CD4-positive, alpha-beta T cell (primary cell): ENCODE measurements at regions of chr17 and their contacts with region 1.

Region 1: DNA sequence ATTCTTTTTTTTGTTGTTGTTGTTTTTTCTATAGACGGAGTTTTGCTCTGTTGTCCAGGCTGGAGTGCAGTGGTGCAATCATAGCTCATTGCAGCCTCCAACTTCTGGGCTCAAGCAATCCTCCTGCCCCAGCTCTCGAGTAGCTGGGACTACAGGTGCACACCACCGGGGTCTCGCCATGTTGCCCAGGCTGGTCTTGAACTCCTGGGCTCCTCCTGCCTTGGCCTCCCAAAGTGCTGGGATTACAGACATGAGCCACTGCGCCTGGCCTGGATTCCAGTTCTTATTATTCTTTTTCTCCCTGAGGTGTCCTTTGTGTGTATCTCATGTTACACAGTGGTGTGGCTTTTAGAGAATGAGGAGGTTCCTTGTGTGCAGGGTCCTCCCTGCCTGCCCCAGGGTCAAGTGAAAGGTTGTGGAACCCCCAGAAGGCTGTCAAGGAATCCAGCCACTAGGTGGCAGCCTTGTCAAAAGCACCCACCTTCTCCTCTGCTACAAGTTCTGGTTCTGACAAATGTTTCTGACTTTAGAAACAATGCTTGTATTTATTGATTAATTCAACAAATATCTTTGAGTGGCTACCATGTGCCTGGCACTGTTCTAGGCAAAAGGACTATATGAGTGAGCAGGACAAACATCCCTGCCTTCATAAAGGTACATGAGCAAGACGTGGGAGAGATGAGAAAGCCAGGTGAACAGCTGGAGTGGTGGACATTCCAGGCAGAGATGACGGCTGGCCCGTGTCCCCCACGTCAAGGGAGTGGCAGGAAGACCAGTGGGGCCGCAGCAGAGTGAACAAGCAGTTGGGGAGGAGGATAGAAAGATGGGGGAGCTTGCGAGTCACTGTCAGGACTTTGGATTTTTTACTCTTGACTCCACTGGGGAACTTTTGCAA is 112.4 kb downstream of the SPECC1 start:
- DNase-seq: peak; percentile 48 to 82 (median 64)
- ATAC-seq: peak; percentile 57
- H3K4me3 ChIP-seq: no peak overlapping the region
- H3K4me3 Mint-ChIP-seq: no peak overlapping the region
- H3K27ac ChIP-seq: no peak overlapping the region
- H3K27ac Mint-ChIP-seq: no peak overlapping the region
- H3K4me1 ChIP-seq: no peaks in the 10 kb centered on the region
- H3K4me1 Mint-ChIP-seq: no peaks in the 10 kb centered on the region
- H3K27me3 ChIP-seq: no peaks in the 10 kb centered on the region
- H3K27me3 Mint-ChIP-seq: peaks cover 8% of the 10 kb centered on the region
- CTCF ChIP-seq: peak; percentile 96

Region 2: GRCh38 chr17:19513897-19514488 is 607.6 kb before region 1 on chr17:
- CTCF ChIA-PET with region 1: no interaction called
- POLR2A ChIA-PET with region 1: no interaction called
- intact Hi-C with region 1: loop called in 1 of 2 experiments (anchors 10 kb)
- DNase-seq: peak; percentile 42 to 84 (median 62)
- ATAC-seq: peak; percentile 75
- H3K4me3 ChIP-seq: no peak overlapping the region
- H3K4me3 Mint-ChIP-seq: no peak overlapping the region
- H3K27ac ChIP-seq: no peak overlapping the region
- H3K27ac Mint-ChIP-seq: peak overlapping the region; percentile 12
- H3K4me1 ChIP-seq: peaks cover 4% of the 10 kb centered on the region
- H3K4me1 Mint-ChIP-seq: peaks cover 6% of the 10 kb centered on the region
- H3K27me3 ChIP-seq: no peaks in the 10 kb centered on the region
- H3K27me3 Mint-ChIP-seq: no peaks in the 10 kb centered on the region
- CTCF ChIP-seq: peak; percentile 94

Region 3: GRCh38 chr17:19992803-19993713 is 128.5 kb before region 1 on chr17:
- CTCF ChIA-PET with region 1: interaction called, 6 read pairs
- POLR2A ChIA-PET with region 1: interaction called, 3 read pairs
- intact Hi-C with region 1: loop called (anchors 1 kb)
- DNase-seq: peak; percentile 56 to 89 (median 69)
- ATAC-seq: peak; percentile 100
- H3K4me3 ChIP-seq: no peak overlapping the region
- H3K4me3 Mint-ChIP-seq: peak overlapping the region; percentile 30
- H3K27ac ChIP-seq: no peak overlapping the region
- H3K27ac Mint-ChIP-seq: no peak overlapping the region
- H3K4me1 ChIP-seq: peaks cover 8% of the 10 kb centered on the region
- H3K4me1 Mint-ChIP-seq: peaks cover 6% of the 10 kb centered on the region
- H3K27me3 ChIP-seq: no peaks in the 10 kb centered on the region
- H3K27me3 Mint-ChIP-seq: peaks cover 14% of the 10 kb centered on the region
- CTCF ChIP-seq: peak; percentile 82

Region 4: GRCh38 chr17:20063665-20064648 is 57.6 kb before region 1 on chr17:
- CTCF ChIA-PET with region 1: no interaction called
- POLR2A ChIA-PET with region 1: no interaction called
- intact Hi-C with region 1: no loop called
- DNase-seq: peak in 2 of 14 experiments; percentile 47 to 49
- ATAC-seq: no peak
- H3K4me3 ChIP-seq: no peak overlapping the region
- H3K4me3 Mint-ChIP-seq: no peak overlapping the region
- H3K27ac ChIP-seq: no peak overlapping the region
- H3K27ac Mint-ChIP-seq: no peak overlapping the region
- H3K4me1 ChIP-seq: no peaks in the 10 kb centered on the region
- H3K4me1 Mint-ChIP-seq: no peaks in the 10 kb centered on the region
- H3K27me3 ChIP-seq: no peaks in the 10 kb centered on the region
- H3K27me3 Mint-ChIP-seq: no peaks in the 10 kb centered on the region
- CTCF ChIP-seq: no peak

Region 5: DNA sequence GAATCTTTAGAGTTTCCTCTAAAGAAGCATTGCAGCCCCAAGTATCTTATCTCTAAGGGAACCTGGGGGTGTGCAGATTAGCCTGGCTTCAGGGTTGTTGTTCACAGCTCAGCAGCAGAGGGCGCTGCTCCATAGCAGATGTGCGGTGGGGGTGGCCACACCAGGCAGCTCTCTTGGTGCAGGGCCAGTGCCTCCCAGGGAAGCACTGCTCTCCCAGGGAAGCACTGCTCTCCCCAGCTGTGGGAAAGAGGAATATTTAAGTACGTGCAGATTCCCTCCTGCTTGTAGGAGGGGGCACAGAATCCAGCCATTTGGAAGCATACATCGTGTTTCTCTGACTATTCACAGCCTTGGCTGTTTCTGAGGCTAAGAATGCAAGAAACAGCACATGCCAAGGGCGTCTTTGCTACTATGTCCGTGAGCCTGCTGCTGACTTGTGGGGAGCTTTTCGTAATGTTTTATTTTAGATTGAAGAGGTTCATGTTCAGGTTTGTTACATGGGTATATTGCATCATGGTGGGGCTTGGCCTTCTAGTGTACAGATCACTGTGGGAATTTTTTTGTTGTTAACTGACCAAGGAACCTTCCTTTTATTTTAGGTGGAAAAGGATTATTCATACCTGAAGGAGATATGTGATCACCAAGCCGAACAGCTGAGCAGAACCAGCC is 105.3 kb after region 1 on chr17:
- CTCF ChIA-PET with region 1: interaction called, 4 read pairs
- POLR2A ChIA-PET with region 1: interaction called, 3 read pairs
- intact Hi-C with region 1: loop called (anchors 1 kb)
- DNase-seq: peak; percentile 66 to 88 (median 74)
- ATAC-seq: peak; percentile 100
- H3K4me3 ChIP-seq: no peak overlapping the region
- H3K4me3 Mint-ChIP-seq: no peak overlapping the region
- H3K27ac ChIP-seq: no peak overlapping the region
- H3K27ac Mint-ChIP-seq: no peak overlapping the region
- H3K4me1 ChIP-seq: peaks cover 6% of the 10 kb centered on the region
- H3K4me1 Mint-ChIP-seq: peaks cover 26% of the 10 kb centered on the region
- H3K27me3 ChIP-seq: no peaks in the 10 kb centered on the region
- H3K27me3 Mint-ChIP-seq: no peaks in the 10 kb centered on the region
- CTCF ChIP-seq: peak; percentile 89

Region 6: DNA sequence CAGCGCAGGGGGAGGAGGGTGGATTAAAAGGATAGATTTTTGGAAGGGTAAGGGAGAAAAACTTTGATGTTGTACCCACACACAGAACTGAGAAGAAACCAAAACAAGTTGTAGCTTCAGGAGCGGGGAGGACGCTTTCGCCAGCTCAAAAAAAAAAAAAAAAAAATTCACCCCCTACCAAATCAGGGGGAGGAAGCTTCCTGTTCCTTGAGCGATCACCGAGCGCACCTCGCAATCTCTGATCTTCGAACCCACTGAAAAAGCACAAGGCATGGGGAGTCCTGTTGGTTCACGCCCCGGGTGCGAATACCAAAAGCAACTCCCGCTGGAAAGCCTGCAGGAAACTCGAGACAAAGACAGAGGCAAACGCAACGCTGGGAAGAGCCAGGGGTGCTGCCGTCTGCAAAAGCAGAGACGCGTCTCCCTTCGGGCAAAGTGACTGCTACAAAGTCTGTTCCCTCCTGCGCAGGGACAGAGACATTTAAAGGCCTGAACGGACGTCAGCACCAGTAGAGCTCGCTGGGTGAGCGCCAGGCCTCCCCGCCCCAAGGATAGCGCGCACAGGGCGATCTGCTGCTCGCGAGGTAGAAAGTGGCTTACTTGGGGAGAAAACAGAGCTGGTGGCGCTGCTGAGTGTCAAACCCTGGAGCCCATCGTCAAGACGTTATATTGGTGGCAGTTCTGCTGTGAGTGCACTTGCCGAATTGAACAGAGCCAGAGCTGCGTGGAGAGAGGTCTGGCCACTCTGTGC is 730.8 kb after region 1 on chr17:
- CTCF ChIA-PET with region 1: no interaction called
- POLR2A ChIA-PET with region 1: no interaction called
- intact Hi-C with region 1: loop called in 1 of 2 experiments (anchors 10 kb)
- DNase-seq: peak in 3 of 14 experiments; percentile 7 to 23 (median 13)
- ATAC-seq: no peak
- H3K4me3 ChIP-seq: peak overlapping the region; percentile 5
- H3K4me3 Mint-ChIP-seq: peak overlapping the region; percentile 70
- H3K27ac ChIP-seq: no peak overlapping the region
- H3K27ac Mint-ChIP-seq: no peak overlapping the region
- H3K4me1 ChIP-seq: no peaks in the 10 kb centered on the region
- H3K4me1 Mint-ChIP-seq: peaks cover 9% of the 10 kb centered on the region
- H3K27me3 ChIP-seq: peaks cover 14 to 22% of the 10 kb centered on the region in 2 experiments
- H3K27me3 Mint-ChIP-seq: peaks cover 35% of the 10 kb centered on the region
- CTCF ChIP-seq: no peak